ENCODE measurements at regions of chr13 and their contacts with region 1.

Region 1: GRCh38 chr13:78247362-78247761 is 328.7 kb upstream of the EDNRB start:
- DNase-seq: no peak
- ATAC-seq: no peak
- H3K4me3 Mint-ChIP-seq: no peak overlapping the region
- H3K27ac Mint-ChIP-seq: no peak overlapping the region
- H3K4me1 Mint-ChIP-seq: no peaks in the 10 kb centered on the region
- H3K27me3 Mint-ChIP-seq: peaks cover 2% of the 10 kb centered on the region

Region 2: GRCh38 chr13:79141082-79141481 is 893.7 kb after region 1 on chr13:
- CTCF ChIA-PET with region 1: no interaction called
- POLR2A ChIA-PET with region 1: interaction called, 10 read pairs
- intact Hi-C with region 1: no loop called
- DNase-seq: no peak
- ATAC-seq: no peak
- H3K4me3 Mint-ChIP-seq: no peak overlapping the region
- H3K27ac Mint-ChIP-seq: no peak overlapping the region
- H3K4me1 Mint-ChIP-seq: no peaks in the 10 kb centered on the region
- H3K27me3 Mint-ChIP-seq: no peaks in the 10 kb centered on the region

Measured in activated CD4-positive, alpha-beta T cell treated with anti-CD3 and anti-CD28 coated beads for 36 hours (primary cell).